ENCODE measurements at regions of chr13 and their contacts with region 1.

Region 1: GRCh38 chr13:71316792-71317363 is 550.1 kb downstream of the DACH1 start:
- DNase-seq: no peak
- ATAC-seq: no peak
- H3K4me3 ChIP-seq: no peak overlapping the region
- H3K27ac ChIP-seq: no peak overlapping the region
- H3K4me1 ChIP-seq: no peaks in the 10 kb centered on the region
- H3K27me3 ChIP-seq: no peaks in the 10 kb centered on the region
- CTCF ChIP-seq: no peak

Region 2: GRCh38 chr13:71213252-71213821 is 103.5 kb before region 1 on chr13:
- intact Hi-C with region 1: no loop called
- DNase-seq: no peak
- ATAC-seq: no peak
- H3K4me3 ChIP-seq: no peak overlapping the region
- H3K27ac ChIP-seq: no peak overlapping the region
- H3K4me1 ChIP-seq: peaks cover 0 to 16% (median 6%) of the 10 kb centered on the region in 9 donors
- H3K27me3 ChIP-seq: no peaks in the 10 kb centered on the region
- CTCF ChIP-seq: no peak

Region 3: GRCh38 chr13:71378961-71379905 is 62.4 kb after region 1 on chr13:
- intact Hi-C with region 1: loop called in 1 of 10 experiments (anchors 10 kb)
- DNase-seq: no peak
- ATAC-seq: peak in 5 of 8 donors; percentile 44 to 82 (median 53)
- H3K4me3 ChIP-seq: peak overlapping the region in 9 of 10 donors; percentile 2 to 51 (median 38)
- H3K27ac ChIP-seq: peak overlapping the region; percentile 10 to 87 (median 45)
- H3K4me1 ChIP-seq: peaks cover 0 to 17% (median 4%) of the 10 kb centered on the region in 9 donors
- H3K27me3 ChIP-seq: no peaks in the 10 kb centered on the region
- CTCF ChIP-seq: no peak

Region 4: GRCh38 chr13:71499235-71499634 is 182.4 kb after region 1 on chr13:
- intact Hi-C with region 1: no loop called
- DNase-seq: no peak
- ATAC-seq: peak in 6 of 8 donors; percentile 23 to 76 (median 62)
- H3K4me3 ChIP-seq: no peak overlapping the region
- H3K27ac ChIP-seq: peak overlapping the region in 7 of 10 donors; percentile 13 to 69 (median 58)
- H3K4me1 ChIP-seq: peaks cover 0 to 29% (median 0%) of the 10 kb centered on the region in 9 donors
- H3K27me3 ChIP-seq: no peaks in the 10 kb centered on the region
- CTCF ChIP-seq: no peak

Measured in heart right ventricle (tissue), 16 donors.